Activated CD8-positive, alpha-beta T cell treated with anti-CD3 and anti-CD28 coated beads for 36 hours (primary cell): ENCODE measurements at regions of chr4 and their contacts with region 1.

Region 1: GRCh38 chr4:7802093-7802726 is 137.5 kb downstream of the AFAP1 start:
- DNase-seq: peak; percentile 91
- ATAC-seq: peak; percentile 97
- H3K4me3 Mint-ChIP-seq: no peak overlapping the region
- H3K27ac Mint-ChIP-seq: no peak overlapping the region
- H3K4me1 Mint-ChIP-seq: peaks cover 9% of the 10 kb centered on the region
- H3K27me3 Mint-ChIP-seq: no peaks in the 10 kb centered on the region
- CTCF ChIP-seq: peak; percentile 93

Region 2: GRCh38 chr4:7411896-7412553 is 390.2 kb before region 1 on chr4:
- CTCF ChIA-PET with region 1: no interaction called
- POLR2A ChIA-PET with region 1: no interaction called
- intact Hi-C with region 1: no loop called
- DNase-seq: no peak
- ATAC-seq: no peak
- H3K4me3 Mint-ChIP-seq: no peak overlapping the region
- H3K27ac Mint-ChIP-seq: no peak overlapping the region
- H3K4me1 Mint-ChIP-seq: no peaks in the 10 kb centered on the region
- H3K27me3 Mint-ChIP-seq: peaks cover 8% of the 10 kb centered on the region
- CTCF ChIP-seq: no peak

Region 3: DNA sequence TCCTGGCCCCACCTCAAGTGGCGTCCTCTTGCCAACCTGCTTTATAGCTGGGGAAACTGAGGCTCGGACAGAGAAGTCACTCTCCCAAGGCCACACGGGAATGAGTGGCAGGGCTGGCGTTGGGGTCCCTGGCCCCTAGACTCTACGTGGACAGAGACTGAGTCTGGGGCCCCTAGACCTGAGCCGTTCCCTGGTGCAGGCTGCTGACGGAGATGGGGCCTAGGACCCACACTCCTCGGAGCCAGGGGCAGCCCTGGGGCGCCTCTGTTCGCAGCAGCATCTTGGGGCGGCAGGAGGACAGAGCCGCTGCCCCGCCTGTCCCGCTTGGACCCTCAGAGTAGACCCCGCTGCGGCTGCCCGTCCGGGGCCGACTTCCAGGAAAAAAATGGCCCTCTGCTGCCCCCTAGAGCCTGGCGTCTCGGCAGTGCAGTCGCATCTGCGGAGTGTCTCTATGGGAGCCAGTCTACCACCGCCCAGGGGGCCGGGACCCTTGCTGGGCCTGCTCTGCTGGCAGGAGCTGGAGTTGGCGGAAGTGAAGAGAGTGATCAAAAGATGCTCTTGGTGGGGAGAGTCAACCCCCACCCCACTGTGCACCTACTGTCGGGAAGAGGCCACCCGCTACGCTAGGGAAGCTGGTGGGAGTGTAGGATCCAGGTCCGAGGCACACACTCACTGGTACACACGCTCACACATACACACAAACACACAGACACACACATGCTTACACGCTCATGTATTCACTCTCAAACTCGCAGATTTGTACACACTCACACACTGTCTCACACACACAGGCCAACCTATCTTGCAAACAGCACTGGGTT is 82.6 kb before region 1 on chr4:
- CTCF ChIA-PET with region 1: interaction called, 10 read pairs
- POLR2A ChIA-PET with region 1: no interaction called
- intact Hi-C with region 1: no loop called
- DNase-seq: peak; percentile 73
- ATAC-seq: peak; percentile 74
- H3K4me3 Mint-ChIP-seq: no peak overlapping the region
- H3K27ac Mint-ChIP-seq: no peak overlapping the region
- H3K4me1 Mint-ChIP-seq: peaks cover 4% of the 10 kb centered on the region
- H3K27me3 Mint-ChIP-seq: peaks cover 13% of the 10 kb centered on the region
- CTCF ChIP-seq: peak; percentile 95

Region 4: GRCh38 chr4:7770224-7771050 is 31.8 kb before region 1 on chr4:
- CTCF ChIA-PET with region 1: interaction called, 33 read pairs
- POLR2A ChIA-PET with region 1: interaction called, 5 read pairs
- intact Hi-C with region 1: no loop called
- DNase-seq: peak; percentile 28
- ATAC-seq: peak; percentile 29
- H3K4me3 Mint-ChIP-seq: no peak overlapping the region
- H3K27ac Mint-ChIP-seq: peak overlapping the region; percentile 68
- H3K4me1 Mint-ChIP-seq: peaks cover 23% of the 10 kb centered on the region
- H3K27me3 Mint-ChIP-seq: no peaks in the 10 kb centered on the region
- CTCF ChIP-seq: no peak

Region 5: DNA sequence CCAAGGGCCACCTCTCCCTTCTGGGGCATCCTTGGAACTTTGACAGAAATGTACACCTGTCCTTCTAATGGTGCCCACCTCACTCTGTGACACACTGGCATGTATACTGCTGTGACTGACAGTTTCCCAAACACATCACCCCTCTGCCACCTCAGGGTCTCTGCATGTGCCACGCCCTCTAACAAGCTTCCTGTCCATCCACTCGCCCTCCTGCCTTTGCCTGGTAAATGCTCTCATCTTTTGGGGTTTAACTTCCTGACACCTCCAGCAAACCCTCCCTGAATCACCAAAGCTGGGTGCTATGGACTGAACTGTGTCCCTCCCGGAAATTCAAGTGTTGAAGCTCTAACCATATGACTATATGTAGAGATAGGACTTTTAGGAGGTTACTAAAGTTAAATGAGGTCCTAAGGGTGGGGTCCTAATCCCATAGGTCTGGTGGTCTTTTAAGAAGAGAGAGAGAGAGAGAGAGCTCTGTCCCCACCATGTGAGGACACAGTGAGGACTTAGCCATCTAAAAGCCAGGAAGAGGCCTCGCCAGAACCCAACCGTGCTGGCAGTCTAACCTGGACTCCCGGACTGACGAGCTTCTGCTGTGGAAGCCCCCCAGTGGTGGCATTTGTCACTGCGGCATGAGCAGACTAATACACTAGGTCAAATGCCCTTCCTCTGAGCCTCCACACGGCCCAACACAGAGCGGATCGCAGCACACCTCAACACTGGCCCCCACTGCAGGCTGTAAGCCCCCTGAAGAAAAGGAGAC is 41.8 kb after region 1 on chr4:
- CTCF ChIA-PET with region 1: interaction called, 14 read pairs
- POLR2A ChIA-PET with region 1: interaction called, 3 read pairs
- intact Hi-C with region 1: no loop called
- DNase-seq: peak; percentile 87
- ATAC-seq: peak; percentile 95
- H3K4me3 Mint-ChIP-seq: no peak overlapping the region
- H3K27ac Mint-ChIP-seq: no peak overlapping the region
- H3K4me1 Mint-ChIP-seq: peaks cover 30% of the 10 kb centered on the region
- H3K27me3 Mint-ChIP-seq: no peaks in the 10 kb centered on the region
- CTCF ChIP-seq: peak; percentile 59

Region 6: GRCh38 chr4:7987148-7987989 is 185.2 kb after region 1 on chr4:
- CTCF ChIA-PET with region 1: interaction called, 133 read pairs
- POLR2A ChIA-PET with region 1: interaction called, 3 read pairs
- intact Hi-C with region 1: loop called (anchors 2 kb)
- DNase-seq: peak; percentile 88
- ATAC-seq: peak; percentile 92
- H3K4me3 Mint-ChIP-seq: no peak overlapping the region
- H3K27ac Mint-ChIP-seq: no peak overlapping the region
- H3K4me1 Mint-ChIP-seq: peaks cover 7% of the 10 kb centered on the region
- H3K27me3 Mint-ChIP-seq: peaks cover 5% of the 10 kb centered on the region
- CTCF ChIP-seq: peak; percentile 84